Activated CD4-positive, alpha-beta T cell treated with anti-CD3 and anti-CD28 coated beads for 36 hours (primary cell): ENCODE measurements at regions of chr21 and their contacts with region 1.

Region 1: DNA sequence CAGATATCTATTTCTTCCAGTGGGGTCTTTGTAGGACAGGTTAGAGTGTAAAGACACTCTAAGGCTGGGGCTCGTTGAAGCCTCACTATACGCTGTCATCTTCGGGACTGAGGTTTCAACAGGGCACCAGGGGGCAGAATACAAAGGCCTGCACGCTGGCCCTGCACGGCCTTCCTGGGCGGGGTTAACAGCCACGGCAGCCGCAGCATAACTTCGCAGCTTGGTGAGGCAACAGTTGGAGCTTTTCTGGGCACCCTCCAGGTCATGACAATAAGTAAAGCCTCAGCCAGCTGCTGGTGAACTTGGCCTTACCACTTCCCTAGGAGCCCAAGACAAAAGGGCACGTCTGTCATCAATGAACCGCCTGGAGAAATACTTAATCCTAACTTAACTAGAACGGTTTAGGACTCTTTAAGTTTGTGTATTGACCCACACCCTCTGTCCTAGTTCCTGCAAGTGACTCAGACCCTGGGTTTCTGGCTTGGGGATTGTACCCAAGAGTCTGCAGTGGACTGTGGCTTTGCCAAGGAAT is 2.3 kb upstream of the RUNX1 start:
- DNase-seq: peak; percentile 91
- ATAC-seq: peak; percentile 52
- H3K4me3 Mint-ChIP-seq: peak overlapping the region; percentile 87
- H3K27ac Mint-ChIP-seq: peak overlapping the region; percentile 95
- H3K4me1 Mint-ChIP-seq: peaks cover 49% of the 10 kb centered on the region
- H3K27me3 Mint-ChIP-seq: no peaks in the 10 kb centered on the region

Region 2: GRCh38 chr21:34745557-34746255 is 305.6 kb before region 1 on chr21:
- CTCF ChIA-PET with region 1: interaction called, 4 read pairs
- POLR2A ChIA-PET with region 1: no interaction called
- intact Hi-C with region 1: loop called in 1 of 2 experiments (anchors 5 kb)
- DNase-seq: peak; percentile 77
- ATAC-seq: peak; percentile 93
- H3K4me3 Mint-ChIP-seq: no peak overlapping the region
- H3K27ac Mint-ChIP-seq: peak overlapping the region; percentile 35
- H3K4me1 Mint-ChIP-seq: peaks cover 5% of the 10 kb centered on the region
- H3K27me3 Mint-ChIP-seq: peaks cover 1% of the 10 kb centered on the region

Region 3: GRCh38 chr21:34946916-34947534 is 104.3 kb before region 1 on chr21:
- CTCF ChIA-PET with region 1: interaction called, 6 read pairs
- POLR2A ChIA-PET with region 1: interaction called, 24 read pairs
- intact Hi-C with region 1: no loop called
- DNase-seq: no peak
- ATAC-seq: peak; percentile 65
- H3K4me3 Mint-ChIP-seq: peak overlapping the region; percentile 13
- H3K27ac Mint-ChIP-seq: peak overlapping the region; percentile 95
- H3K4me1 Mint-ChIP-seq: peaks cover 92% of the 10 kb centered on the region
- H3K27me3 Mint-ChIP-seq: no peaks in the 10 kb centered on the region

Region 4: GRCh38 chr21:35011681-35012080 is 39.7 kb before region 1 on chr21:
- CTCF ChIA-PET with region 1: no interaction called
- POLR2A ChIA-PET with region 1: interaction called, 5 read pairs
- intact Hi-C with region 1: loop called in 1 of 2 experiments (anchors 5 kb)
- DNase-seq: no peak
- ATAC-seq: no peak
- H3K4me3 Mint-ChIP-seq: peak overlapping the region; percentile 19
- H3K27ac Mint-ChIP-seq: peak overlapping the region; percentile 52
- H3K4me1 Mint-ChIP-seq: peaks cover 93% of the 10 kb centered on the region
- H3K27me3 Mint-ChIP-seq: no peaks in the 10 kb centered on the region

Region 5: DNA sequence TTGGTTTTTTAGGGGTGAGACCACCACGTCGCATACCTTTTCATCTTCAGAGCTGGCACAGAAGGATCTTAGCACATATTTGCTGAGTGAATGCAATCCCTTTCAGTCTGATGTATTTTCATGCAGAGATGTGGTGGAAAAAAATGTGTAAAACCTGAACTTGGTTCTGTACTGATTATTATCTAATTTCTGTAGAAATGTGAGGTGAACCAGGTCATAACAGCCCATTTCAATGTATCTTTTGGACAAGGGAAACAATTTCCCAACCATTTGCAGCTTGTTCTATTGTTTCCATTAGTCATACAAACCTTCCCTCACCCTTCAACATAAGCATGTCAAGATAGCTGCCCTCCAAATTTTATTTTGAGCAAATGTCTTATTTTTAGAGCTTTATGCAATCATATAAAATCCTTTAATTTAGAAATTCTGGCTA is 44.5 kb after region 1 on chr21:
- CTCF ChIA-PET with region 1: interaction called, 15 read pairs
- POLR2A ChIA-PET with region 1: interaction called, 13 read pairs
- intact Hi-C with region 1: loop called (anchors 1 to 2 kb)
- DNase-seq: peak; percentile 20
- ATAC-seq: peak; percentile 25
- H3K4me3 Mint-ChIP-seq: no peak overlapping the region
- H3K27ac Mint-ChIP-seq: peak overlapping the region; percentile 86
- H3K4me1 Mint-ChIP-seq: peaks cover 50% of the 10 kb centered on the region
- H3K27me3 Mint-ChIP-seq: peaks cover 2% of the 10 kb centered on the region

Region 6: GRCh38 chr21:35342440-35342839 is 291.1 kb after region 1 on chr21:
- CTCF ChIA-PET with region 1: no interaction called
- POLR2A ChIA-PET with region 1: interaction called, 3 read pairs
- intact Hi-C with region 1: loop called (anchors 1 to 2 kb)
- DNase-seq: peak; percentile 55
- ATAC-seq: peak; percentile 78
- H3K4me3 Mint-ChIP-seq: peak overlapping the region; percentile 59
- H3K27ac Mint-ChIP-seq: peak overlapping the region; percentile 94
- H3K4me1 Mint-ChIP-seq: peaks cover 39% of the 10 kb centered on the region
- H3K27me3 Mint-ChIP-seq: peaks cover 1% of the 10 kb centered on the region

Region 7: GRCh38 chr21:35840197-35840799 is 788.9 kb after region 1 on chr21:
- CTCF ChIA-PET with region 1: interaction called, 5 read pairs
- POLR2A ChIA-PET with region 1: no interaction called
- intact Hi-C with region 1: loop called in 1 of 2 experiments (anchors 2 kb)
- DNase-seq: peak; percentile 73
- ATAC-seq: no peak
- H3K4me3 Mint-ChIP-seq: no peak overlapping the region
- H3K27ac Mint-ChIP-seq: no peak overlapping the region
- H3K4me1 Mint-ChIP-seq: peaks cover 2% of the 10 kb centered on the region
- H3K27me3 Mint-ChIP-seq: no peaks in the 10 kb centered on the region